Calu3 (cell line): ENCODE measurements at regions of chr4 and their contacts with region 1.

Region 1: DNA sequence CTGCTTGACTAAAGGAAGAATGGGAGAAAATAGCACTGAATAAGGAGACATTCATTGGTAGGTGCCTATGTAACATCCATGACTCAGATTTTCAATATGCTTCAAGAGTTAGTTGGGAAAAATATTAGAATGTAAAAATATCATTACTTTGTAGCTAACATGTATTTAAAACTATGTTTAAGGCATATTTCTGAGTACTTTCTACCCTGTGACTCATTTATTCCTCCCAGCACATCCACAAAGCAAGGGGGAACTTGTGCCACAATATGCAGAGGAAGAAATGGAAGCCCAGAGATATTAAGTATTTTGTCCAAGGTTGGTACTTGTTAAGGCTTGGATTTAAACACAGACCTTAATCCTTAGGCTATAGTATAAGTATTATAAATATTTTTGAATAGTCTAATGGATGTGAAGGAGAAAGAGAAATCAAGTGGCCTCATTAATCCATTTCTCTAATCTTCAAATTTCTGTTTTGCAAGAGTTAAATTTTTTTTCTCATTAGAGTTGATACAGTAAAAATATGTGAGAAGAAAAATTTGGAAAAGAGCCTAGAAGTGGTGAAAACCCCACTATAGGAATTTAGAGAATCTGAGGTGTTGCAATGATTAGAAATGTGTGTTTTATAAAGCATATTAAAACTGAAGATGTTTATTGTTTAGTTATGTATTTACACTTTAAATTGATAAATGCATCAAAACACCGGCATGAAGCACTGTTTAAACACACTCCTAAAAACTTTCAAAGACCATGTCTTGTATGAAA is 149.3 kb upstream of the GYPA start:
- DNase-seq: no peak
- H3K4me3 Mint-ChIP-seq: no peak overlapping the region
- H3K27ac Mint-ChIP-seq: no peak overlapping the region
- H3K4me1 Mint-ChIP-seq: no peaks in the 10 kb centered on the region
- H3K27me3 Mint-ChIP-seq: no peaks in the 10 kb centered on the region
- CTCF ChIP-seq: no peak

Region 2: GRCh38 chr4:143558823-143559756 is 730.8 kb before region 1 on chr4:
- CTCF ChIA-PET with region 1: no interaction called
- intact Hi-C with region 1: loop called (anchors 5 kb)
- DNase-seq: peak; percentile 69
- H3K4me3 Mint-ChIP-seq: peak overlapping the region; percentile 73
- H3K27ac Mint-ChIP-seq: no peak overlapping the region
- H3K4me1 Mint-ChIP-seq: no peaks in the 10 kb centered on the region
- H3K27me3 Mint-ChIP-seq: peaks cover 8% of the 10 kb centered on the region
- CTCF ChIP-seq: no peak

Region 3: DNA sequence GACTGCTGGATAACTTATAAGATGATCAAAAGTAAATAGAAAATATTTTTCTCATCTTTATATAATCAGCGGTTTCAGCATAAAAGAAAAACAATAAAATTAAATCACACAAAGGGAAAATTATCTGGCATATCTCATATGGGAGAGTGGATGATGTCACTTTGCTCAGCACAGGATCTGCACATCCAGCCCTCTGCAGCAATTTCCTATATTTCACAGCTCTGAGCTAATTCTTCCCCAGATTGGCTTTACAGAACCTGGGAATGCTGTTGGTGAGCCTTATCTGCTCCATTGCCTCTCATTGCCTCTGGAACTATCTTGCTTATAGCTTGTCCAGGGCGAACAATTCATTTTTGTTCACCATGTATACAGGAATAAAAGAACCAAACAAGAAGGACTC is 610.4 kb before region 1 on chr4:
- CTCF ChIA-PET with region 1: no interaction called
- intact Hi-C with region 1: no loop called
- DNase-seq: no peak
- H3K4me3 Mint-ChIP-seq: no peak overlapping the region
- H3K27ac Mint-ChIP-seq: no peak overlapping the region
- H3K4me1 Mint-ChIP-seq: no peaks in the 10 kb centered on the region
- H3K27me3 Mint-ChIP-seq: peaks cover 22% of the 10 kb centered on the region
- CTCF ChIP-seq: no peak